Activated T-helper 1 cell treated with anti-CD3 and anti-CD28 coated beads, Interleukin-12 subunit alpha, Interleukin-12 subunit beta, Interleukin-2, Interleukin-4 antibody, amounts not matched to agents 30 ng/mL and 10 ng/mL and 1 ng/mL, durations not matched to agents 14 hours and 24 hours and 36 hours (primary cell): ENCODE measurements at regions of chr3 and their contacts with region 1.

Region 1: DNA sequence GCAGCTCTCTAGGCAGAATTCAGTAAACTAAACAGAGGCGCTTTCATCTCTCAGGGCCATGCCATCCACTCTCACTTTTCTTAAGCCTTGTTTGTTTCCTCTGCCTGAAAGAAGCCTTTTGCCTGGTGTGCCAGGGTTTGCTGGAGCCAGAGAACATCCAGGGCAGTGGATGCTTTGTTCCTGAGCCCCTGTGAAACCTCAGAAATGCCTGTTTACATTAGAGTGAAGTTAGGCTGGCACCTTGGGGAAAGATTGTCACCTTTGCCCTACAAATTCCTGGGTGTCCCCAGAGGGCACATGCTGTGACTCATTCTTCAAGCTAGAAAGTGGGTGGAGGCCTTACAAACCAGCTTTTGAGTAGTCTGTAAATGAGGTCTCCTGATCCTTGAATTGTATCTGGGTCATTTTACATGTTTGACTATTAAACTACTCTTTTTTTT is 10.7 kb upstream of the TRAK1 start:
- DNase-seq: no peak
- H3K4me3 Mint-ChIP-seq: peak overlapping the region; percentile 38
- H3K27ac Mint-ChIP-seq: peak overlapping the region; percentile 84
- H3K4me1 Mint-ChIP-seq: peaks cover 51% of the 10 kb centered on the region
- H3K27me3 Mint-ChIP-seq: no peaks in the 10 kb centered on the region

Region 2: DNA sequence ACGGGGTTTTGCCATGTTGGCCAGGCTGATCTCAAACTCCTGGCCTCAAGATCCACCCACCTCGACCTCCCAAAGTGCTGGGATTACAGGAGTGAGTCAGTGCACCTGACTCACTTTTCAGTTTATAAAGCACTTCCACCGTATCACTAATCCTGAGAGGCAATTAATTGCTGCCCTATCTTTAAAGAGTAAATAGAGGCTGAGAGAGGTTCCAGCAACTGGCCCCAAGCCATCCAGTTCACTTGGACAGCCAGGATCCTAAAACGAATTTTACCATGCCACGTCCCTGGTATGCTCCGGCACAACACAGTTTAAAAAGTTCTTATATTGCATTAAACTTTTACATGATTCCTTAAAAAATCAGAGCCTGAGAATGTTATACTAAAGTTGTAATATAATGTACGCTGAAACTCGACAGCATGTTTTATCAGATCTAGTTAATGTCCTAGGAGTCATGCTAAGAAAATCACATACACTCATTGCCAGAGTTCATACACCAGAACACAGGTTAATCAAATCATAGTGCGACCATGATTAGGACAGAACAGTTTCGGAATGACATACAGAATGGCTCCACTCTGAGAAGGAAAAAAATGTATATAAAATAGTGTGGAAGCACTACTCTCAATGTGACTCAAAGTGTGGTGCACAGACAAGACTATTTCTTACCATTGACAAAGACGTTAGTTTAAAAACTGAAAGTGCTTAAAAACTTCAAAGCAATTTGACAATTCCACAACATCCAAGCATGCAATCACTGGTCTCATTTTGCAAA is 243.9 kb before region 1 on chr3:
- intact Hi-C with region 1: loop called (anchors 5 kb)
- DNase-seq: no peak
- H3K4me3 Mint-ChIP-seq: no peak overlapping the region
- H3K27ac Mint-ChIP-seq: no peak overlapping the region
- H3K4me1 Mint-ChIP-seq: peaks cover 9% of the 10 kb centered on the region
- H3K27me3 Mint-ChIP-seq: peaks cover 1% of the 10 kb centered on the region

Region 3: DNA sequence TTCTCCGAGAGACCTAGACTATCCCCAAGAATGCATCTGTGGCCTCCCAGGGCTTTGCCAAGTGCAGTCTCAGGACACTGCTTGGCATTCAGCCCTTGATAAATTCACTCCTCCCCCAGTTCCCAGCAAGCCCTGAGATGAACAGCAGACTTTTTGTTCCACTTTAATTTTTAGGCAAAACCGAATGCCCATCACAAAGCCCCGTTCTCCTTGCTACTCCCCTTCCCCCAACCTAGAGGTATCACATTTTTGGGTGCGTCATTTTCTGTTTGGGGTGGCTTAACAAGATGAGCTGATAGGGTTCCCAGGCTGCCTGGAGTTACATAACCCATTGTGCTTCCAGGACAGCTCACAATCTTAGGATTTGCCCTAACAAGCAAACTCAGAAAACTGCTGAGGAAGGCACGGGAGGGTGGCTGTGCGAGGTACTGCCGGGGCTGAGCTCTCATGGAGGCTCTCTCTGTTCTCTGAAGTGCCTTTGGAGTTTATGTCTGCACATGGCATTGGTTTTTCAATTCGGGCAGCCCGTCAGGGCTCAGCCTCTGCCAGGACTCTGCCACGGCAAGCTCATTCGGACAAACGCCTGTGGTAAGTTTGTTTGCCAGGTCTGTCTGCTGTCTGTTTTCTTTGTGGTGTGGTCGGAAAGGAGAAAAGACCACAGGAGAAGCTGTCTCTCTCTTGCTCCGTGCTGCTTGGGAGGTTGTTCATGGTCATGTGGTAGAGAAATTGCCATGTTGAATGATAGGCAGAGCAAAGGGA is 10.7 kb after region 1 on chr3 and contains the start of gene TRAK1:
- intact Hi-C with region 1: loop called (anchors 1 kb)
- DNase-seq: no peak
- H3K4me3 Mint-ChIP-seq: peak within 1 kb of the TSS; percentile 11
- H3K27ac Mint-ChIP-seq: peak within 1 kb of the TSS; percentile 64
- H3K4me1 Mint-ChIP-seq: peaks cover 53% of the 10 kb centered on the region
- H3K27me3 Mint-ChIP-seq: no peaks in the 10 kb centered on the region
- total RNA-seq, gene TRAK1: 32.6 and 33.8 TPM in 2 replicates

Region 4: GRCh38 chr3:42122651-42123581 is 42.4 kb after region 1 on chr3:
- intact Hi-C with region 1: no loop called
- DNase-seq: no peak
- H3K4me3 Mint-ChIP-seq: no peak overlapping the region
- H3K27ac Mint-ChIP-seq: no peak overlapping the region
- H3K4me1 Mint-ChIP-seq: peaks cover 32% of the 10 kb centered on the region
- H3K27me3 Mint-ChIP-seq: no peaks in the 10 kb centered on the region